Endothelial cell of umbilical vein (primary cell): ENCODE measurements at regions of chr17 and their contacts with region 1.

Region 1: DNA sequence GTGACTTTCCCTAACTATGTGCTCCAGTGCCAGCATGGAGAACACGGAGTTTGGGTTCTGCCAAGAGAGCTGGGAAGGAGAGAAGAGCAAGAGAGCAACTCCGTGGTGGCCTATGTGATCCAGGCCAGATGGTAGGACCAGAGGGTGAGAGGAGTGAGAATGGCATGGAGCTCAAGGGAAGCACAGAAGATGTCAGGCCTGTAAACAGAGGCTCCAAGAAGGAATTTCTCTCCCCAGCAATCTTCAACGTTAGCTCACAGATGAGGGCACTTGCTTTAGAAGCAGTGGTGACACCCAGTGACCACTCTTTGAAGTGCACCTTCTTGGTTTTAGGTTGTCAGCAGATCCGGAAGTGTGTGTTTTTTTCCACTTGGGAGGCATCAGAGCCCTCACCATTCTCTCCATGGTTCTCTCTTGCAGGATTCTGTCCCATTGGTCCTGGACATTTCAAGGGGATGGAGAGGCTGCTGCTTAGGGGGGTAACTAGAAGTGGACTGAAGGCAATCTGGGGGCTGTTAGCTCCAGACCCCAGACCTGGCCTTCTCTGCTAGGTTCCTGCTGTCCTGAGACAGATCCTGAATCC is 18.1 kb upstream of the TMEM98 start:
- DNase-seq: peak; percentile 88
- H3K4me3 ChIP-seq: no peak overlapping the region
- H3K27ac ChIP-seq: no peak overlapping the region
- H3K4me1 ChIP-seq: peaks cover 9% of the 10 kb centered on the region
- H3K27me3 ChIP-seq: peaks cover 0 to under 1% of the 10 kb centered on the region in 2 experiments
- CTCF ChIP-seq: peak; percentile 72 to 81
- POLR2A ChIP-seq: no peak

Region 2: DNA sequence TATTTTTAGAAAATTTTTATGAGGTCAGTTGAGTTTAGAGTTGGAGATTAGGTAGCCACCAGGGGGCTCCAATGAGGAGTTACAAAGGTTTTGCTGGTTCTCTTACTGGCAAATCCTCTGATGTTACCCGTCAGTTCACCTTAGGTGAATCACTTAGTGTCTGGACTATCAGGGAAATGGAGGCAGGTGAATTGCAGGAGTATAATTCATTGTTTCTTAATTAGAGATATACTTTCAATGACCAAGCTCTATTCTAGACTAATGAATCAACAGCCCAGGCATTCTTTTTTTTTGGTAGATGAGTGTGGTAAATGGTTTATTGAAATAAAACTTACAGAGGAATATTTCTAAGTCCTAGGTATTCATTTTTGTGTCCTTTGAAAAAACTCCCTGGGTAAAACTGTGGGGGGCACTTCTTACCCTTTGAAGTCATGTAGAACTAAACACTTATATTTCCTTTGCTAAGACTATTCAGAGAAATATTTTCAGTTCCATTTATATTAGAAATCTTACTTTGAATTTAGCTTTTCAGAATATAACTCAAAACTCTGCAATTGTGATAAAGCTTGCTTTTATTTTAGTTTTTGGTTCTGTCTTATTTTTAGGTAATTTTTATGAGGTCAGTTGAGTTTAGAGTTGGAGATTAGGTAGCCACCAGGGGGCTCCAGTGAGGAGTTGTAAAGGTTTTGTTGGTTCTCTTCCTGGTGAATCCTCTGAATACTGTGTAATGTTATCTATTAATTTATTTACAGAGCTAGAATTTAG is 447.8 kb before region 1 on chr17:
- CTCF ChIA-PET with region 1: interaction called, 10 read pairs
- POLR2A ChIA-PET with region 1: no interaction called
- dilution Hi-C with region 1: no loop called
- intact Hi-C with region 1: no loop called
- DNase-seq: peak; percentile 69
- H3K4me3 ChIP-seq: no peak overlapping the region
- H3K27ac ChIP-seq: no peak overlapping the region
- H3K4me1 ChIP-seq: no peaks in the 10 kb centered on the region
- H3K27me3 ChIP-seq: no peaks in the 10 kb centered on the region
- CTCF ChIP-seq: peak; percentile 59 to 67
- POLR2A ChIP-seq: no peak

Region 3: DNA sequence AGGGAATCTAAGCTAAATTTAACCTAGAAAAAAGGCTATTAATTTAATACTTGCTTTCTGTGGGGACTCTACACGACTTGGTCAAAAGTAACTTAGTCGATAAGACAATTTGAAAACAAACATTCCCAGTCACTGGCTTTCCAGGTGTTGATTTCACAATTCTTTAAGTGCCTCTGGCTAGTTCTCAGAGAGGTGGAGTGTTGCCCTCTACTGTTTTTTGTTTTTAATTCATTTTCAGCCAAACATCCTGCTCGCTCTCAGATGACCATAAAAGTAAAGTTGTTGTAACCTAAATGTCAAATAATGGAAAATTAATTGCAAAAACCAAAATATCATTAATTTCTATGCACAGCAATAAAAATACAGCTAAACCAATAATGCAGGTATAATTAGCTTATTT is 140.0 kb before region 1 on chr17:
- CTCF ChIA-PET with region 1: interaction called, 13 read pairs
- POLR2A ChIA-PET with region 1: no interaction called
- dilution Hi-C with region 1: no loop called
- intact Hi-C with region 1: no loop called
- DNase-seq: no peak
- H3K4me3 ChIP-seq: no peak overlapping the region
- H3K27ac ChIP-seq: no peak overlapping the region
- H3K4me1 ChIP-seq: peaks cover 24% of the 10 kb centered on the region
- H3K27me3 ChIP-seq: no peaks in the 10 kb centered on the region
- CTCF ChIP-seq: no peak
- POLR2A ChIP-seq: no peak

Region 4: GRCh38 chr17:32783602-32784001 is 126.3 kb before region 1 on chr17:
- CTCF ChIA-PET with region 1: interaction called, 119 read pairs
- POLR2A ChIA-PET with region 1: no interaction called
- dilution Hi-C with region 1: no loop called
- intact Hi-C with region 1: loop called (anchors 1 kb)
- DNase-seq: peak; percentile 75
- H3K4me3 ChIP-seq: no peak overlapping the region
- H3K27ac ChIP-seq: no peak overlapping the region
- H3K4me1 ChIP-seq: peaks cover 4% of the 10 kb centered on the region
- H3K27me3 ChIP-seq: no peaks in the 10 kb centered on the region
- CTCF ChIP-seq: peak; percentile 37 to 53
- POLR2A ChIP-seq: no peak

Region 5: GRCh38 chr17:32882734-32883133 is 27.1 kb before region 1 on chr17:
- CTCF ChIA-PET with region 1: interaction called, 75 read pairs
- POLR2A ChIA-PET with region 1: no interaction called
- dilution Hi-C with region 1: no loop called
- intact Hi-C with region 1: loop called (anchors 2 kb)
- DNase-seq: no peak
- H3K4me3 ChIP-seq: no peak overlapping the region
- H3K27ac ChIP-seq: no peak overlapping the region
- H3K4me1 ChIP-seq: peaks cover under 1% of the 10 kb centered on the region
- H3K27me3 ChIP-seq: peaks cover 5% of the 10 kb centered on the region in 2 experiments
- CTCF ChIP-seq: no peak
- POLR2A ChIP-seq: no peak

Region 6: GRCh38 chr17:32927724-32928585 is 18.1 kb after region 1 on chr17 and contains the start of gene TMEM98:
- CTCF ChIA-PET with region 1: interaction called, 6 read pairs
- POLR2A ChIA-PET with region 1: no interaction called
- dilution Hi-C with region 1: no loop called
- intact Hi-C with region 1: loop called (anchors 1 kb)
- DNase-seq: no peak
- H3K4me3 ChIP-seq: peak within 1 kb of the TSS; percentile 40 to 78 (median 73)
- H3K27ac ChIP-seq: peak within 1 kb of the TSS; percentile 36
- H3K4me1 ChIP-seq: peaks cover 31% of the 10 kb centered on the region
- H3K27me3 ChIP-seq: no peaks in the 10 kb centered on the region
- CTCF ChIP-seq: no peak
- POLR2A ChIP-seq: no peak
- total RNA-seq, gene TMEM98: 83.6 and 101 TPM in 2 replicates

Region 7: GRCh38 chr17:32976131-32976530 is 66.3 kb after region 1 on chr17:
- CTCF ChIA-PET with region 1: no interaction called
- POLR2A ChIA-PET with region 1: no interaction called
- dilution Hi-C with region 1: no loop called
- intact Hi-C with region 1: no loop called
- DNase-seq: no peak
- H3K4me3 ChIP-seq: no peak overlapping the region
- H3K27ac ChIP-seq: no peak overlapping the region
- H3K4me1 ChIP-seq: no peaks in the 10 kb centered on the region
- H3K27me3 ChIP-seq: no peaks in the 10 kb centered on the region
- CTCF ChIP-seq: no peak
- POLR2A ChIP-seq: no peak

Region 8: GRCh38 chr17:32997753-32998632 is 88.1 kb after region 1 on chr17:
- CTCF ChIA-PET with region 1: interaction called, 8 read pairs
- POLR2A ChIA-PET with region 1: no interaction called
- dilution Hi-C with region 1: no loop called
- intact Hi-C with region 1: loop called (anchors 1 kb)
- DNase-seq: peak; percentile 67
- H3K4me3 ChIP-seq: no peak overlapping the region
- H3K27ac ChIP-seq: no peak overlapping the region
- H3K4me1 ChIP-seq: no peaks in the 10 kb centered on the region
- H3K27me3 ChIP-seq: no peaks in the 10 kb centered on the region
- CTCF ChIP-seq: peak; percentile 86 to 95
- POLR2A ChIP-seq: no peak